PC-9 (cell line): ENCODE measurements at regions of chr11 and their contacts with region 1.

Region 1: GRCh38 chr11:59615637-59616395 is at the start of gene OSBP:
- DNase-seq: peak; percentile 99 to 100
- H3K4me3 ChIP-seq: peak within 1 kb of the TSS; percentile 71
- H3K27ac ChIP-seq: peak within 1 kb of the TSS; percentile 67
- H3K4me1 ChIP-seq: peaks cover 37% of the 10 kb centered on the region
- H3K27me3 ChIP-seq: no peaks in the 10 kb centered on the region
- CTCF ChIP-seq: no peak
- total RNA-seq, gene OSBP: 40.4 and 49.7 TPM in 2 replicates

Region 2: GRCh38 chr11:59560702-59561469 is 54.9 kb before region 1 on chr11:
- CTCF ChIA-PET with region 1: no interaction called
- POLR2A ChIA-PET with region 1: interaction called, 6 read pairs
- intact Hi-C with region 1: loop called (anchors 1 kb)
- DNase-seq: peak; percentile 81 to 96
- H3K4me3 ChIP-seq: peak overlapping the region; percentile 79
- H3K27ac ChIP-seq: peak overlapping the region; percentile 84
- H3K4me1 ChIP-seq: peaks cover 22% of the 10 kb centered on the region
- H3K27me3 ChIP-seq: no peaks in the 10 kb centered on the region
- CTCF ChIP-seq: no peak

Region 3: DNA sequence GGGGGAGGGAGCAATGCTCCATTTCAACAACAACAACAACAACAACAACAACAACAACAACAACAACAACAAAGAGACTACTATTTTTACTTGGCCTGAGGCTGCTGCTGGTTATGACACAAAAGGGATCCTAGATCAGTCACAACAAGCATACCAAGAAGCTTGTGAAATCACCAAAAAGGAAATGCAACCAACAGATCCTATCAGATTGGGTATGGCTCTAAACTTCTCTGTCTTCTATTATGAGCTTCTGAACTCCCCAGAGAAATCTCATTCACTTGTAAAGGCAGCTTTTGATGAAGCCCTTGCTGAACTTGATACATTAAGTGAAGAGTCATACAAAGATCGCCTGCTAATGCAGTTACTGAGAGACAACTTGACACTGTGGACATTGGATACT is 462.2 kb after region 1 on chr11:
- CTCF ChIA-PET with region 1: no interaction called
- POLR2A ChIA-PET with region 1: no interaction called
- intact Hi-C with region 1: no loop called
- DNase-seq: no peak
- H3K4me3 ChIP-seq: no peak overlapping the region
- H3K27ac ChIP-seq: no peak overlapping the region
- H3K4me1 ChIP-seq: no peaks in the 10 kb centered on the region
- H3K27me3 ChIP-seq: peaks cover 20% of the 10 kb centered on the region
- CTCF ChIP-seq: no peak